Astrocyte of the cerebellum (primary cell): ENCODE measurements at regions of chr2 and their contacts with region 1.

Region 1: DNA sequence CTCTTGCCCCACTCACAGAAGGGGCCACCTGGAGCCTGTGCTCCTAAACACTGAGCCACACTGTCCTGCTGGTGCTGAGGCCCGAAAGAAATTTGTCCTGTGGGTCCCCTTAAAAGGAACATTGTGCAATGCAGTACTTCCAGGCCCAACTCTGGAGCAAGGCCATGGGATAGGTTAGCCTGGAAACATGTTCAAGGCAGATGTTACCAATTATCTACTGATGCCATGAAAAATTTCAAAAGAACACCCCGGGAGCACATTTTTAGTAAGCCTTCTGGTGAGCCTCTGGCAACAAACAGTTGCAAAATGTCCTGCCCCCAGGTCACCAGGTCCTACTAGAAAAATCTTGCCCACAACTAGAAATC is 12.3 kb upstream of the PTMA start:
- DNase-seq: no peak
- H3K4me3 ChIP-seq: no peak overlapping the region
- CTCF ChIP-seq: no peak

Region 2: DNA sequence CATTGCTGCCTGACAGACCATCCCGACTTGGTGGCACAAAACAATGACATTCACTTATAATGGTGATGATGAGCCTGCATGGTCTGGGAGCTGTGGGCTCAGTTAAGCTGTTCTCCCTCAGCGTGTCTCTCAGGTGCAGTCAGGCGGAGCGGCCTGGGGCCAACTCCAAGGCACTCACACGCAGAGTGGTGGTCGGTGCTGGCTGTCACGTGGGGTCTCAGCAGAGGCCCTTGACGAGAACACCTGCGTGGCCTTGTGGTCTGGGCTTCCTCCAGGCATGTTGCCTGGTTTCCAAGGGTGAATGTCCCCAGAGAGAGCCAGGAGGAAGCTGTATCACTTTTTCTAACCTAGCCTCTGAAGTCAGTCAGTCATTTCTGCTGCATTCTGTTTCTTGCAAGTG is 467.8 kb before region 1 on chr2:
- in situ Hi-C with region 1: no loop called
- DNase-seq: no peak
- H3K4me3 ChIP-seq: no peak overlapping the region
- CTCF ChIP-seq: no peak

Region 3: DNA sequence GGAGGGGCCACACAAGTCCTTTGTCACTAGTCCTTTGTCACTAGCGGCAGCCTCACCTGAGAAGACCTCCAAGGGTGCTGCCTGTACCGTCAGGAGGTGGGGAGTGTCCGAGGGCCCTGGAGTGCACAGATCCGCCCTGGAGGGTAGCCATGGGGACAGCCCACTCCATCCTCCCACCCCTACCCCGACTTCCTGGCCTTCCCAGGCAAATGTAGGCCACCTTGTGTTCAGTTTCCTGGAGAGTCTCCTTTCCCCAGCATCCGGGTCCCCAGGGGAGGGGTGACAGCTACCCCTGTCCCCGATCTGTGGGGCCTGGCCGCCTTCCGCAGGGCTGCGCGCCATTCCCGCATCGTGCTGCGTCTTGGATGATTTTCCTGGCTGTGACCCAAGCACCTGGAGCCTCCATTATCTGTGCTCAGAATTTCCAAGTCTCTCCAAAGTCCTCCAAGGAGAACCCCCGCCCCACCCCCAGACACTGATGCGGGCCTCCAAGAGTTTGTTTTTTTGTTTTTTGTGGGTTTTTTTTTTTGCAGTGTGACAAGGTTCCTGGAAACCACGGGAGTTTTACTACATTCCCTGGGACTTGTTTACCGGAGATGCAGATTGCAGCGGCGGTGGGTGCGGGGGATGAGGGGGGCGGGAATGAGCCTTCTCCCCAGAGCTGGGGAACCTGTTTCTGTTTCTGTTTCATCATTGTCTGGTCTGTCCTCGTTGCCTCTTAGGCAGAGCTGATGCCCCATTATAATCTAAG is 74.7 kb before region 1 on chr2:
- in situ Hi-C with region 1: loop called (anchors 10 kb)
- DNase-seq: no peak
- H3K4me3 ChIP-seq: no peak overlapping the region
- CTCF ChIP-seq: no peak

Region 4: DNA sequence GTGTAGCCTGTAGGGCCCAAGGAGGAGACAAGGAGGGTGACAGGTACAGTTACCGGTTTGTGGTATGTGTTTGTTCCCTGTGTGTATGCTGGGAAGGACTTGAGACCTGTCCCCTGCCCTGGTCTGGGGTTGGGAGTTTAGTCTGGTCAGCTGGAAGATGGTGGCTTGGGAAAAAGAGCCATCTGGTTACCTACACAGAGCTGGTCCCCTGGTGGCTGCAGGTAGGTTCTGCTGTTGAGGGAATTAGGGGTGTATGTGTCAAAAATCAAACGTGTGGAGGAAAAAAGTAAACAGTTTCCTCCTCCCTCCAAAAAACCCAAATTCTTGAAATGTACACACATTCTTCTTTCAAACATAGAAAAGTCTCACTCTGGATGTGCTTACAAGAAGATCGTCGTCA is 36.6 kb after region 1 on chr2:
- in situ Hi-C with region 1: no loop called
- DNase-seq: no peak
- H3K4me3 ChIP-seq: no peak overlapping the region
- CTCF ChIP-seq: no peak

Region 5: GRCh38 chr2:231910771-231911170 is 214.8 kb after region 1 on chr2:
- in situ Hi-C with region 1: no loop called
- DNase-seq: no peak
- H3K4me3 ChIP-seq: no peak overlapping the region
- CTCF ChIP-seq: no peak